Endothelial cell of umbilical vein (primary cell): ENCODE measurements at regions of chr7 and their contacts with region 1.

Region 1: DNA sequence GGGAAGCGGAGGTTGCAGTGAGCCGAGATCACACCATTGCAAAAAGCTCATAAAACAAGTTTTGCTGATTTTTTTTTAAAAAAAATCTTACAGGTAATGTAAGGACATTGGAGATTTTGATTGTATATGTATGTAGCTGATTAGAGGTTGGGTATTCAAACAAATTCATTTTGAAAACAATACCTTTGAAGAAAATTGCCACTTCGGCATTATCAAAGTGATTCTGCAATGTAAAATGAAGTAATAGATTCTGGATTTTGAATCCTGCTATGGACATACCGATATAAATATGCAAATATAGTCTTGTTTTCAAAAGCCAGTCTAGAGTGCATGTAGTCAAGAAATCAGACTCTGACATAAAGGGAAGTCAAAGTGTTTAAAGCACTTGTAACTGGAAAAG is 12.4 kb upstream of the IGF2BP3 start:
- DNase-seq: no peak
- H3K4me3 ChIP-seq: no peak overlapping the region
- H3K27ac ChIP-seq: no peak overlapping the region
- H3K4me1 ChIP-seq: no peaks in the 10 kb centered on the region
- H3K27me3 ChIP-seq: peaks cover 32 to 42% of the 10 kb centered on the region in 2 experiments
- CTCF ChIP-seq: no peak
- POLR2A ChIP-seq: no peak

Region 2: GRCh38 chr7:23445326-23445725 is 37.4 kb before region 1 on chr7:
- CTCF ChIA-PET with region 1: no interaction called
- POLR2A ChIA-PET with region 1: no interaction called
- dilution Hi-C with region 1: no loop called
- intact Hi-C with region 1: loop called (anchors 1 kb)
- DNase-seq: no peak
- H3K4me3 ChIP-seq: no peak overlapping the region
- H3K27ac ChIP-seq: no peak overlapping the region
- H3K4me1 ChIP-seq: no peaks in the 10 kb centered on the region
- H3K27me3 ChIP-seq: no peaks in the 10 kb centered on the region
- CTCF ChIP-seq: no peak
- POLR2A ChIP-seq: no peak

Region 3: DNA sequence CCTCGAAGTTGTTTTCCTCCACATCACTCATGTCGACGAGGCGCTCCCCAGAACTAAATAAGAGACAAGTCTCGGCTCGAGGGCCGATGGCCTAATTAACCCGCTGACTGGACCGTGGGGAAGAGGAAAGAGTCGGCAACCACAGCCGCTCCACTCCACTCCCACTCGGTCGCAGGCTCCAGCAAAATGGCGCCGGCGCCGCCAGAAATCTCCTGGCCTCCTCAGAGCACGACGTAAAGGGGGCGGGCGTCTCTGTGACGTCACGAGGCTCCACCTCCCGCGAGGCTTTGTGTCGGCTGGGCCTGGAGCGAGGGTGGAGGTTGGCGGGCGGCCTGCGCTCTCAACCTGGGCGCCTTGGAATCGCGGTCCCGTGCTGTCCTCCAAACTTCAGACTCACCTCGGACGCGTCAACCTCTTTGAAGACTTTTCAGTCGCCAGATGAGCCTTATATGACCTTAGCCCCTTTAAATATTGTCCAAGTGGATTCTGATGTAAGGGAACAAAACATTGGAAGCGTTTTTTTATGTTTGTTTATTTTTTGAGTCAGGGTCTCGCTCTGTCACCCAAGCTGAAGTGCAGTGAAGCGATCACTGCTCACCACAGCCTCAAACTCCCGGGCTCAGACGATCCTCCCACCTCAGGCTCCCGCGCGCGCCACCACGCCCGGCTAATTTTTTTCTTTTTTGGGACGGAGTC is 49.3 kb after region 1 on chr7 and contains the start of gene TRA2A:
- CTCF ChIA-PET with region 1: no interaction called
- POLR2A ChIA-PET with region 1: no interaction called
- dilution Hi-C with region 1: no loop called
- intact Hi-C with region 1: no loop called
- DNase-seq: peak; percentile 94
- H3K4me3 ChIP-seq: peak within 1 kb of the TSS; percentile 83 to 99 (median 88)
- H3K27ac ChIP-seq: peak within 1 kb of the TSS; percentile 100
- H3K4me1 ChIP-seq: peaks cover 30% of the 10 kb centered on the region
- H3K27me3 ChIP-seq: no peaks in the 10 kb centered on the region
- CTCF ChIP-seq: no peak
- POLR2A ChIP-seq: peak; percentile 99
- total RNA-seq, gene TRA2A: 105 and 112 TPM in 2 replicates

Region 4: GRCh38 chr7:23546897-23547572 is 64.3 kb after region 1 on chr7:
- CTCF ChIA-PET with region 1: no interaction called
- POLR2A ChIA-PET with region 1: no interaction called
- dilution Hi-C with region 1: no loop called
- intact Hi-C with region 1: no loop called
- DNase-seq: peak; percentile 91
- H3K4me3 ChIP-seq: no peak overlapping the region
- H3K27ac ChIP-seq: no peak overlapping the region
- H3K4me1 ChIP-seq: no peaks in the 10 kb centered on the region
- H3K27me3 ChIP-seq: peaks cover 0 to 2% of the 10 kb centered on the region in 2 experiments
- CTCF ChIP-seq: peak; percentile 82 to 97
- POLR2A ChIP-seq: no peak